ENCODE measurements at regions of chr4 and their contacts with region 1.

Region 1: DNA sequence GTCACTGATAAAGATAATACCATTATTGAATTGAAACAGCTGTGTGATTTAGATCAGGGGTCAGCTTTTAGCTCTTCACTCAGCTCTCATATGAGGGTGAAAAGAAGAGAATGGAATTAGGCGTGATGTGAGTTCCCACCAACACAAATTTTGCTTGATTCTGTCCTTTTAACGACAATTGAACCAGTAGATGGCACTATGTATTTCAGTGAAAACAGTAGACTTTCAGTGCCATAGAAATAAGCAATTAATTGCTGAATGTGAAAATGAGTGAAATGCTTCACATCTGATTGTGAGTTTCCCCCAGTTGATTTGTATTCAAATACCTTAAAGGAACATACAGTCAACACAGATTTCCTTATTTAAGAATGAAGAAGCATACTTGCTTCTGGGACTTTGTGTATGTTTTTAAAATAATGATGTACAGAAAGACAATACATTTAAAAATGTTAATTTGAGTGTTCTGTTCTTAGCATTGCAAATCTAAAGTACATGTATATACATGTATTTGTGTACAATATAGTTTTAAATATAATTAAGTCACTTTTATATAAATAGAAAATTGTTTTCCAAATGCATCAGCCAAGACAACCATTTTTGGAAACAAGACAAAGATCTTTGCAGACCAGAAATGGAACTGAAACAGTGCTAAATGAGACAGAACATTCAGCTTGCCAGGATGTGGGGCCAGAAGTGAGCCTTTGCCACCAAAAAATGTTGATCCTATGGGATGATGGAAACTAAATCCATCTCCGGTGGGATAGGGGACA is 178.8 kb downstream of the SNCA start:
- DNase-seq: no peak
- H3K27ac ChIP-seq: no peak overlapping the region
- CTCF ChIP-seq: peak; percentile 62

Region 2: DNA sequence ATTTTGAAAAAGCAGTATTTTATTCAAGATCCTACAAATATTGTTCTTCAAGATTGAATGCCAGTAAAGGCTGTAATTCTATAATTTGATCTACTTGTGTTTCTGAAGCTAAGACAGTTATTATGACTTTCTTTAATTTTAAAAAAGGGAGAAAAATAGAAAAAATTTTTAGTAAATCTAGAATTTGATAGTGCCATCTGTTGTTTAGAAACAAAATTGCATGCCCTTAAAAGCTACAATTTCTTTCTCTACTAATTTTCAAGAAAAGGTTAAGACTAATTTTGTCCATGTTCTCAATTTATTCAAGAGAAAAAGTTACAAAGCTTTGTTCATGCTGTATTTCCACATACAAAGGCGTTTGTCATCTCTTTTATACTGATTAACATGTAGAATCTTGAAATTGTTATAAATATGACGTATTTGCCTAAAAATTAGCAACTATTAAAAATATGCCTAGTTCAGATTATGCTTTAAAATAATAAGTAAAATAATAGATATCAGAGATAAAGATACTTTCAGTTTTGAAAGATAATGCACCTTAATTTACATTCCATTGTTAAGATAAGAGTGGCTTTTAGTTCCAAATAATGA is 211.0 kb after region 1 on chr4:
- CTCF ChIA-PET with region 1: interaction called, 13 read pairs
- POLR2A ChIA-PET with region 1: no interaction called
- DNase-seq: no peak
- H3K27ac ChIP-seq: no peak overlapping the region
- CTCF ChIP-seq: peak; percentile 67